ENCODE measurements at regions of chr3 and their contacts with region 1.

Region 1: GRCh38 chr3:50292159-50293078 is at the start of gene IFRD2:
- DNase-seq: peak; percentile 98
- H3K4me3 Mint-ChIP-seq: peak within 1 kb of the TSS; percentile 91
- H3K27ac Mint-ChIP-seq: peak within 1 kb of the TSS; percentile 88
- H3K4me1 Mint-ChIP-seq: peaks cover 24% of the 10 kb centered on the region
- H3K27me3 Mint-ChIP-seq: no peaks in the 10 kb centered on the region
- total RNA-seq, gene IFRD2: 117 to 125 TPM

Region 2: DNA sequence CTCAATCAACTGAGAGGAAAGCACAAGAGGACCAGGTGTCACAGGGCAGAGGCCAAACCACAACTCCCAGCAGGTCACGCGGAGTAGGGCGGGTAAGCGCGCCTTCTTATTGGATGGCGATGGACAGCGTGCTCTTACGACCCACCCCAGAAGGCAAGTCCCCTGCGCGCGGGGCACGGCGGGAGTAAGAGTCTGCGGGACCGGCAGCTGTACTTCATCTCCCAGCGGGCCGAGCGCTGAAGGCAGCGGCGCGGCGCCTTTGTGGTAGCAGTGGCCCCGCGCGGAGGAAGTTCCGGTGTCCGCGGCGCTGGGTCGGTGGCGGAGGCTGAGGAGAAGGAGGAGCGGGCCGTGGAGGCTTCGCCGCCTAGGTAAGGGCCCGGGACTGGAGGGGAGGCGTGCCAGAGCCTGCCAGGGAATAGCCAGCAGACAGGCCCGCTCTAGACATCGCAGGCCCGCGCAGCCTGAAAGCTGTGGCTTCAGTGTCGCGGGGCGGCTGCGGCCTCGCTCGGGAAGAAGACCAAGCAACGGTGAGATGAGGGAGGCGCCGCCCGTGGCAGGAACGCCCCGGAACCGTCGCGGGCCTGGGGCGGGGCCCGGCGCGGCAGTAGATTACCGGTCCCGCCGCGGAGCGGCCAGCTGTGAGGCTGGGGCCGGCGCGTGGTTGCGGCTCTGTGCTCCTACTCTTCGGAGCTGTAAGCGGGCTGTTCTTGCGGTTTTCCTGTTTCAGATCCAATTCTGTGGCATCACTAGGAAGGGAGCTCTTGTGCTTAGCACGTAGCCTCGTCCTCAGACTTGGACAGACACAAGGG is 352.4 kb before region 1 on chr3 and contains the start of gene RBM6:
- CTCF ChIA-PET with region 1: no interaction called
- intact Hi-C with region 1: loop called (anchors 1 kb)
- DNase-seq: peak; percentile 98
- H3K4me3 Mint-ChIP-seq: peak within 1 kb of the TSS; percentile 98
- H3K27ac Mint-ChIP-seq: peak within 1 kb of the TSS; percentile 93
- H3K4me1 Mint-ChIP-seq: peaks cover 29% of the 10 kb centered on the region
- H3K27me3 Mint-ChIP-seq: no peaks in the 10 kb centered on the region
- total RNA-seq, gene RBM6: 89.1 to 98.2 TPM

Region 3: GRCh38 chr3:50321336-50322114 is 29.1 kb after region 1 on chr3:
- CTCF ChIA-PET with region 1: interaction called, 13 read pairs
- intact Hi-C with region 1: loop called (anchors 1 kb)
- DNase-seq: peak; percentile 83
- H3K4me3 Mint-ChIP-seq: peak overlapping the region; percentile 86
- H3K27ac Mint-ChIP-seq: peak overlapping the region; percentile 80
- H3K4me1 Mint-ChIP-seq: peaks cover 38% of the 10 kb centered on the region
- H3K27me3 Mint-ChIP-seq: no peaks in the 10 kb centered on the region

Region 4: DNA sequence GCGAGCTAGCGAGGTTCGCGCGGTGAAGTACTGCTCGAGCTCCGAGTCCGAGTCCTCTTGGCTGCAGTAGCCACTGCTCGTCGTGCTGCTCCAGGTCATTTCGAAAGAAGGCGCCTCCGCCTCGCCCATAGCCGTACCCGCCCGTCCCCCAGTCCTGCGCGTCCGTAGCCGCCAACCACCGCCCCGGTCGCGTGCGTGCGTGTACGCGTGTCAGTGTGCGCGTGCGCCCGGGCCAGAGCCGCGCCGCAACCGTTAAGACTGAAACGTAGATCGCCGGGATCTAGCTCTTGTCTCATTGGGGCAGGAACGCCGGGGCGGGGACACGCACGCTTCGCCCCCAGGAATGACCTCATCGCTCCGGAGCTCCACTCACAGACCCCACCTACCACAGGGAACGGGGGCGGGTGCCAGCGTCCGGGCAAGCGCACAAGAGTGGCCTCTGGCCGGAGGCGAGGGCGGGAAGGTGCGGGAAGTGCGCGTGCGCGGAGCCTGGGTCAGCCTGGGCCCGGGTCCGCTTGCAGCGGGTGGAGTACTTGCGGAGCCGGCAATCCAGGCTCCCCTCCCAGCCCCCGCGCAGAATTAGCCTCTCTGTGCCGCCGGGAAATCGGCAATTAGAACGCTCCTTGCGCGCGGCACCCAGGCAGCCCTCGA is 44.9 kb after region 1 on chr3:
- CTCF ChIA-PET with region 1: no interaction called
- intact Hi-C with region 1: loop called (anchors 1 kb)
- DNase-seq: peak; percentile 99
- H3K4me3 Mint-ChIP-seq: peak overlapping the region; percentile 94
- H3K27ac Mint-ChIP-seq: peak overlapping the region; percentile 94
- H3K4me1 Mint-ChIP-seq: peaks cover 57% of the 10 kb centered on the region
- H3K27me3 Mint-ChIP-seq: no peaks in the 10 kb centered on the region

Region 5: GRCh38 chr3:50358911-50359759 is 66.7 kb after region 1 on chr3 and contains the start of gene TMEM115:
- CTCF ChIA-PET with region 1: no interaction called
- intact Hi-C with region 1: loop called (anchors 1 kb)
- DNase-seq: peak; percentile 98
- H3K4me3 Mint-ChIP-seq: peak within 1 kb of the TSS; percentile 97
- H3K27ac Mint-ChIP-seq: peak within 1 kb of the TSS; percentile 89
- H3K4me1 Mint-ChIP-seq: peaks cover 43% of the 10 kb centered on the region
- H3K27me3 Mint-ChIP-seq: no peaks in the 10 kb centered on the region
- total RNA-seq, gene TMEM115: 10.6 to 11.1 TPM

Region 6: GRCh38 chr3:50370594-50370993 is 78.2 kb after region 1 on chr3:
- CTCF ChIA-PET with region 1: no interaction called
- intact Hi-C with region 1: no loop called
- DNase-seq: no peak
- H3K4me3 Mint-ChIP-seq: no peak overlapping the region
- H3K27ac Mint-ChIP-seq: no peak overlapping the region
- H3K4me1 Mint-ChIP-seq: peaks cover 25% of the 10 kb centered on the region
- H3K27me3 Mint-ChIP-seq: no peaks in the 10 kb centered on the region